Activated B cell treated with CpG ODN at 0.5 μM for 24 hours (primary cell): ENCODE measurements at regions of chr12 and their contacts with region 1.

Region 1: DNA sequence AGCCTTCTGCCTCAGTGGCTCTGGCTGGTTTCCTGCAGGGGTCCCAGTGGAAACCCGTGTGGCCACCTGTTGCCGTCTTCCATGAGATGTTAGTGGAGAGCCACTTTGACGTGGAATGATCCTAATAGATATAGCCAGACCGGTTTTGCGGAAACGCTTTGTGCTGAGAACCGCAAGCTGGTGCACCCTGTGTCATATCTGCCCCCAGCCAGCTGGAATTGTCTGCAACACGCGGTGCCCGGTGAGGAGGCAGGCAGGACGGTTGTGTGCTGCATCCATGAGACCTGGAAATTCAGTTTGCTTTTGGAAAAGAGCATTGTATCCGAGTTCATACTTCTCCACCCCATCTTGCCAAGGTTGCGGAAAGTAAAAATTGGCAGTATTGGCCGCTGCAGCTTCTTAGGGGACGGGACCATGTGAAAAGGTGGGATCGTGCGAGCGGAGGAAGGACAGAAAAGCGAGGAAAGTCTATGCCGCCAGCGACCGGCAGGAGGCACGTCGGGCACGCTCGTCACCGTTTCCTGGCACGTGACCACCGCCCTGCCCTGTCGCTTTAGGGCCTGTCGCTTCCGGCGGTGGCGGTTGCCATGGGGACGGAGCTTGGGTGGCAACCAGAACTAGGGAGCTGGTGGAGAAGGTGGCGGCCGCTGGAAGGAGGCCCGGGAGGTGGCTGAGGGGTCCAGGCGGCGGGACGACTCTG is at the start of gene CFAP251:
- DNase-seq: peak; percentile 86
- ATAC-seq: peak; percentile 96
- H3K4me3 Mint-ChIP-seq: peak within 1 kb of the TSS; percentile 80
- H3K27ac Mint-ChIP-seq: peak within 1 kb of the TSS; percentile 51
- H3K4me1 Mint-ChIP-seq: peaks cover 12% of the 10 kb centered on the region
- H3K27me3 Mint-ChIP-seq: no peaks in the 10 kb centered on the region
- CTCF ChIP-seq: no peak
- total RNA-seq, gene CFAP251: 0.91 and 1.2 TPM in 2 replicates

Region 2: GRCh38 chr12:121992059-121992879 is 74.1 kb after region 1 on chr12:
- CTCF ChIA-PET with region 1: interaction called, 11 read pairs
- POLR2A ChIA-PET with region 1: interaction called, 12 read pairs
- intact Hi-C with region 1: loop called (anchors 1 kb)
- DNase-seq: peak; percentile 48
- ATAC-seq: peak; percentile 87
- H3K4me3 Mint-ChIP-seq: peak overlapping the region; percentile 75
- H3K27ac Mint-ChIP-seq: peak overlapping the region; percentile 97
- H3K4me1 Mint-ChIP-seq: peaks cover 49% of the 10 kb centered on the region
- H3K27me3 Mint-ChIP-seq: no peaks in the 10 kb centered on the region
- CTCF ChIP-seq: no peak

Region 3: GRCh38 chr12:122021822-122022526 is 103.8 kb after region 1 on chr12 and contains the start of gene BCL7A:
- CTCF ChIA-PET with region 1: interaction called, 42 read pairs
- POLR2A ChIA-PET with region 1: interaction called, 10 read pairs
- intact Hi-C with region 1: loop called (anchors 1 kb)
- DNase-seq: peak; percentile 72
- ATAC-seq: peak; percentile 76
- H3K4me3 Mint-ChIP-seq: peak within 1 kb of the TSS; percentile 91
- H3K27ac Mint-ChIP-seq: peak within 1 kb of the TSS; percentile 95
- H3K4me1 Mint-ChIP-seq: peaks cover 46% of the 10 kb centered on the region
- H3K27me3 Mint-ChIP-seq: peaks cover 2% of the 10 kb centered on the region
- CTCF ChIP-seq: no peak
- total RNA-seq, gene BCL7A: 38.6 and 41.4 TPM in 2 replicates

Region 4: DNA sequence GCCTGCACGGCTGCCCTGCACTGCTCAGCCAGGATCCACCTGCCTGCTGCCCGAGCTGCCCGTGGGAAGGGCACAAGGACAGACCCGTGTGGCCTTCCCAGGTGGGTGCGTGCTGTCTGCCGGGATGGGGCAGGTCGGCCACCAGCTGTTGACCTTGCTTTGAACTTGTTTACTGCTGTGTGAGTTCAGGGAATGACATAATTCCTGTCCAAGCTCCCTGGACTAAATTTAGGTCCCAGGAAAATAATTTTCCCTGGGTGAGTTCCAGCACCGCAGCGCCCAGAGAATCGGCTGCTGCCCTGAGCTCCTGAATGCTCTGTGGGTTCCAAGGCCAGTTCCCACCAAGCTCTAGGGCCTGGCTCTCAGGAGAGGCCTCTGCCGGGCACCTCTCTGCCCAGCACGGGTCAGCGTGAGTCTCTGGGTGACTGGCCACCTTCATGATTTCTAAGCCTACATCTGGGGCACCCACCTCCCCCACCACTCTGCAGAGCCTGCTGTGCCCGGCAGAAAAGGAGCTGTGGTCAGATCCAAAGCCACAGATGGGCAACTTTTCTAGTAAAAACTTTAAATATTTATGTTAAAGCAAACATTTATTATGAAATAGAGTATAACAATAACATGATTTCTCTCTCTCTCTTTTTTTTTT is 133.2 kb after region 1 on chr12:
- CTCF ChIA-PET with region 1: interaction called, 7 read pairs
- POLR2A ChIA-PET with region 1: no interaction called
- intact Hi-C with region 1: loop called (anchors 1 kb)
- DNase-seq: no peak
- ATAC-seq: no peak
- H3K4me3 Mint-ChIP-seq: no peak overlapping the region
- H3K27ac Mint-ChIP-seq: no peak overlapping the region
- H3K4me1 Mint-ChIP-seq: peaks cover 4% of the 10 kb centered on the region
- H3K27me3 Mint-ChIP-seq: no peaks in the 10 kb centered on the region
- CTCF ChIP-seq: no peak

Region 5: GRCh38 chr12:122067966-122068365 is 149.8 kb after region 1 on chr12:
- CTCF ChIA-PET with region 1: no interaction called
- POLR2A ChIA-PET with region 1: no interaction called
- intact Hi-C with region 1: no loop called
- DNase-seq: peak; percentile 51
- ATAC-seq: peak; percentile 85
- H3K4me3 Mint-ChIP-seq: peak overlapping the region; percentile 77
- H3K27ac Mint-ChIP-seq: peak overlapping the region; percentile 85
- H3K4me1 Mint-ChIP-seq: peaks cover 51% of the 10 kb centered on the region
- H3K27me3 Mint-ChIP-seq: no peaks in the 10 kb centered on the region
- CTCF ChIP-seq: no peak

Region 6: DNA sequence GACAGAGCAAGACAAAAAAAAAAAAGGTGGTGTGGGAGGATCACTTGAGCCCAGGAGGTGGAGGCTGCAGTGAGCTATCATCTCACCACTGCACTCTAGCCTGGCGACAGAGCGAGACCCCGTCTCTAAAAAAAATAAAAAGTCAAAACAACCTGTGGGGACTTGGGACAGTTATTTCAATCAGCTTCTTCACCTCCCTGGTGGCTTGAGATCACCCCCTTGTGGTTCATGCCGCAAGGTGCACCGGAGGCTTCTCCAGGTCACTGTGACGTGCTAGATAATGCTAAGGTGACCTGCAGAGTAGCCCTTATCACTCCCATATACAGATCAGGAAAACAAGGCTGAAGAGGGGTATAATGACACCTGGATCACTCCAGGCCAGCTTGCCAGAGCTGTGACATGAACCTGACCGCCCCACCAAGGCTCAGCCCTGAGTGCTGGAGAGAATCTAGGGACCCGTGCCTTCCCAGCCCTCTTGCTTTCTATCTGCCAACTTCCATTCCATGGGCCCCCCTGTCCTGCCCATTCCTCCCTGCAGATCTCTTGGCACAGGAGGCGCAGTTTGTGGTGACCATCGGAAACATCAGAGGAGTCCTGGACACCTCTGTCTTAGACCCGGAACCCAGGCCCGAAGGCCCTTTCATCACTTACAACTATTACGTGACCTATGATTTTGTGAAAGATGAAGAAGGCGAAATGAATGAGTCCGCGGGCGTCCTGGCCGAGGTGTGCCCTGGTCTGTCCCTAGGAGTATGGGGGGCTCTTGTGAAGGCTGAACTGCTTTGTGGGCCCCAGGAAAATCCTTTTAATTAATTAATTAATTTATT is 272.9 kb after region 1 on chr12:
- CTCF ChIA-PET with region 1: interaction called, 3 read pairs
- POLR2A ChIA-PET with region 1: no interaction called
- intact Hi-C with region 1: loop called (anchors 1 kb)
- DNase-seq: peak; percentile 42
- ATAC-seq: peak; percentile 92
- H3K4me3 Mint-ChIP-seq: no peak overlapping the region
- H3K27ac Mint-ChIP-seq: no peak overlapping the region
- H3K4me1 Mint-ChIP-seq: no peaks in the 10 kb centered on the region
- H3K27me3 Mint-ChIP-seq: no peaks in the 10 kb centered on the region
- CTCF ChIP-seq: no peak